CD4-positive, alpha-beta T cell (primary cell): ENCODE measurements at regions of chr5 and their contacts with region 1.

Region 1: DNA sequence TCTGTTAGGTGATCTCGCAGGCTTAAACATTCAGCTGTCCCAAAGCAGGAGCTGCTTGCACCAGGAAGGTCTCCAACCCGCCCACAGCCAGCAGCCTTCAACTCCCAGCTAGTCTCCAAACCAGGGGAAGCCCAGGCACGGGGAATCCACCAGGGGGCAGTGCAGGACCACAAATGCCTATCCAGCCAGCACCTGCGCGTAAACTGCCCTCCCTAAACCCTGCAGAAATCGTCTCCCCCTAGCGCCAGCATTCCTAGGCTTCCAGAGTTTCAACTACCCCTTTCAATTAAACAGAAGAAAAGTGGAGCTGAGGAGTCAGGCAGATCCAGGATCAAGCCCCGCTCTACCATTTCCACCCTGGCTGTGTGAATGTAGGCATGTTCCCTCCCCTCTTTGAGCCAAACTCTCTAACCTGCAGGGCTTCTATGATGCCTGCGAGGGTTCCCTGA is 72.0 kb downstream of the HRH2 start:
- DNase-seq: peak; percentile 85 to 96 (median 92)
- ATAC-seq: peak; percentile 98
- H3K4me3 ChIP-seq: no peak overlapping the region
- H3K4me3 Mint-ChIP-seq: no peak overlapping the region
- H3K27ac ChIP-seq: no peak overlapping the region
- H3K27ac Mint-ChIP-seq: no peak overlapping the region
- H3K4me1 ChIP-seq: peaks cover 8% of the 10 kb centered on the region
- H3K4me1 Mint-ChIP-seq: peaks cover 7% of the 10 kb centered on the region
- H3K27me3 ChIP-seq: peaks cover 10% of the 10 kb centered on the region in 2 experiments
- H3K27me3 Mint-ChIP-seq: peaks cover 31% of the 10 kb centered on the region
- CTCF ChIP-seq: peak; percentile 93

Region 2: DNA sequence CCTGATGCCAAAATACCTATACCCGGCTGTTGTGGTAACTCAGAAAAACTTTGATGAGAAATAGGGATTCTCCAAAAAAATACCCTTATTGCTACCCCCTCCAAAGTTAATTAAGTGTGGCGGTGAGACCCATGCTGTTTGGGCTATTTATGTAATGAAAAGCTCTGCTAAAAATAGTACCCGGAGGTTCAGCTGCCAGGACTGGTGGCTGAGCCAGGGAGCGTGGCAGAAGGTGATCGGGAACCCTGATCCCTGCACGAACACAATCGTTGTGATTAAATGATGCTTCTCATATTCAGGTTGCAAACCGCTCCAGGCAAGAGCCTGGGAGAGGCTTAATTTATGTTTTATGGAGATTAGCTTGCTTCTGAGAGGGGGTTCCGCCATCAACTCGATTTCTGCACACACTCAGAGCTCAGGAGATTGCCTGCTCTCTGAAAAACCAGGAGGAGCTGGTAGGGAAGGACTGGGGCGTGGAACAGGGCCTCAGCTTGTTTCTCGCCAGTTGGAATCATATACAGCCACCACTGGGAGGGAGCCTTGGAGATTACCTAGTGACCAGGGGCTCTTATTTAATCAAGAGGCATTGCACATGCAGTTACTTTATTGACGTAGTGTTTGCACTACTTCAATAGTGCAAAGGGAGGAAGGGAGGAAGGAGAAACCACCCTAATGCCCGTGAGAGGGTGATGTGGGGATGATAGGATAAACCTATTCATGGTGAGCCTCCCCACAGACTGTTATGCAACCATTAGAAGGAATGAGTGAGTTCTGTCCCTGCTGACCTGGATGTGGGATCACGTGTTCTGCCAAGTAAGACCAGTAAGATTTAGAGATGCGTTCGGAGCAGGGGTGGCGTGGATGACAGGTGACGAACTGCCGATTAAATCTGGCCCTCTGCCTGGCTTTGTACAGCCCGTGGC is 48.5 kb before region 1 on chr5:
- CTCF ChIA-PET with region 1: no interaction called
- POLR2A ChIA-PET with region 1: no interaction called
- intact Hi-C with region 1: no loop called
- DNase-seq: no peak
- ATAC-seq: no peak
- H3K4me3 ChIP-seq: no peak overlapping the region
- H3K4me3 Mint-ChIP-seq: no peak overlapping the region
- H3K27ac ChIP-seq: no peak overlapping the region
- H3K27ac Mint-ChIP-seq: no peak overlapping the region
- H3K4me1 ChIP-seq: peaks cover 31% of the 10 kb centered on the region
- H3K4me1 Mint-ChIP-seq: peaks cover 56% of the 10 kb centered on the region
- H3K27me3 ChIP-seq: no peaks in the 10 kb centered on the region
- H3K27me3 Mint-ChIP-seq: no peaks in the 10 kb centered on the region
- CTCF ChIP-seq: no peak

Region 3: DNA sequence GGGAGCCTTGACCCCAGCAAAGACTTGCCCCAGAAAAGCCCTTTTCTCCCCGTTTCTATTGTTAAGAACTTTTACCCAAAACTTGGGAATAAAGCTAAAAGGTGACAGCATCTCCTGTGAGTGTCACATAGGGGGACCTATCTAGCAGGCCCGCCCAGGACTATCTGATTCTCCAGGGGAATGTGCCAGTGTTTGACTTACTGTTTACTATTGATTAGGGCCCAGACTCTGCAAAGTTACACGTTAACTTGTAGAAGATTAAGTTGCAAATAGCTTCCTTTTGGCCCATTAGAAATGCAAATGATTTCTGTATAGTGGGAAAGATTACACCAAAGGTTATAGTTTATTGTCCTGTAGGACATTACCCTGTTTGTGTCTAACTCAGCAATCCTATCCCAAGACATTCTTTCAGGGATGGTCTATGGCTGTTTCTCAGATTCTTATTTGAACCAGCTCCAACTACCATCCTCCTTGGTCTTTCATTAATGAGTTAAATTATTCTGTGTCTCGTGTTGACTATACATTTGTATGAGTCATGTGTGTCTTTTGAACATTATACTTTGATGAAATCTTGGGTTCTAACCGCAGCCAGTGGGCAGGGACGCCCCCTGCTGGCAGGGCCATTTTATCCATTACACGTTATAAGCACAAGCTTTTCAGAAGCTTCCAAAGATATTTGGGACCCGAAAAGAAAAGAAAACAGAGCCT is 11.3 kb before region 1 on chr5:
- CTCF ChIA-PET with region 1: interaction called, 16 read pairs
- POLR2A ChIA-PET with region 1: no interaction called
- intact Hi-C with region 1: no loop called
- DNase-seq: peak; percentile 20 to 82 (median 52)
- ATAC-seq: no peak
- H3K4me3 ChIP-seq: no peak overlapping the region
- H3K4me3 Mint-ChIP-seq: no peak overlapping the region
- H3K27ac ChIP-seq: no peak overlapping the region
- H3K27ac Mint-ChIP-seq: no peak overlapping the region
- H3K4me1 ChIP-seq: no peaks in the 10 kb centered on the region
- H3K4me1 Mint-ChIP-seq: peaks cover 6% of the 10 kb centered on the region
- H3K27me3 ChIP-seq: no peaks in the 10 kb centered on the region
- H3K27me3 Mint-ChIP-seq: no peaks in the 10 kb centered on the region
- CTCF ChIP-seq: peak; percentile 75

Region 4: DNA sequence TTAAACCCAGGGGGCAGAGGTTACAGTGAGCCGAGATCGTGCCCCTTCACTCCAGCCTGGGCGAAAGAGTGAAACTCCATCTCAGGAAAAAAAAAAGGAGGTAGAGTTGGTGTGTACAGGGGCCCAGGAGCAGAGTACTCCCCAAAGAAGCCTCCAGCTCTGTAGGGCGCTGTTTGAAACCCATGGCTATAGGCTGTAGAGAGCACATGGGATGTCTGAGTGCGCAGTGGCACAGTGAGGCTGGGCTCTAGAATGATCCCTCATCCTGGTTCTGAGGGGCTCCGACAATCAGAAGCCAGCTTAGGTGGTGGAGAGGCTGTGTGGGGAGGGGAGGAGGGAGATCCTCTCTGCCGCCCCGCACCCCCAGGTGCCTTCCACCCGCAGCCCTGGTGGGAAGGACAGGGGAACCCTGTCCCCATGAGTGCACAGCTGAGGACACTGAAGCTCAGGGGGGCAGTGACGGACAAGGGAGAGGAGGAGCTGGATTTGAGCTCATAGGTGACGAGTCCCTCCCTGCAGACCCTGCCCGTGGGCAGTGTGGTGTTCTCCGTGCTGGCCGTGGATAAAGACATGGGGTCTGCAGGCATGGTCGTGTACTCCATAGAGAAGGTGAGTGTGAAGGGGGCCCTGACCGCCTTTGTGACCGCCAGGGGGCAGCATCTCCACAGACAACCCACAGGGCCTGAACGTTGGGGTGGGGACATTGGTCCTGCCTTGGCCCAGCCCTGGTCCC is 843.9 kb after region 1 on chr5:
- CTCF ChIA-PET with region 1: no interaction called
- POLR2A ChIA-PET with region 1: no interaction called
- intact Hi-C with region 1: loop called in 1 of 2 experiments (anchors 5 kb)
- DNase-seq: peak; percentile 60 to 89 (median 76)
- ATAC-seq: peak; percentile 79
- H3K4me3 ChIP-seq: no peak overlapping the region
- H3K4me3 Mint-ChIP-seq: no peak overlapping the region
- H3K27ac ChIP-seq: no peak overlapping the region
- H3K27ac Mint-ChIP-seq: no peak overlapping the region
- H3K4me1 ChIP-seq: peaks cover 13% of the 10 kb centered on the region
- H3K4me1 Mint-ChIP-seq: no peaks in the 10 kb centered on the region
- H3K27me3 ChIP-seq: no peaks in the 10 kb centered on the region
- H3K27me3 Mint-ChIP-seq: peaks cover 4% of the 10 kb centered on the region
- CTCF ChIP-seq: peak; percentile 79

Region 5: DNA sequence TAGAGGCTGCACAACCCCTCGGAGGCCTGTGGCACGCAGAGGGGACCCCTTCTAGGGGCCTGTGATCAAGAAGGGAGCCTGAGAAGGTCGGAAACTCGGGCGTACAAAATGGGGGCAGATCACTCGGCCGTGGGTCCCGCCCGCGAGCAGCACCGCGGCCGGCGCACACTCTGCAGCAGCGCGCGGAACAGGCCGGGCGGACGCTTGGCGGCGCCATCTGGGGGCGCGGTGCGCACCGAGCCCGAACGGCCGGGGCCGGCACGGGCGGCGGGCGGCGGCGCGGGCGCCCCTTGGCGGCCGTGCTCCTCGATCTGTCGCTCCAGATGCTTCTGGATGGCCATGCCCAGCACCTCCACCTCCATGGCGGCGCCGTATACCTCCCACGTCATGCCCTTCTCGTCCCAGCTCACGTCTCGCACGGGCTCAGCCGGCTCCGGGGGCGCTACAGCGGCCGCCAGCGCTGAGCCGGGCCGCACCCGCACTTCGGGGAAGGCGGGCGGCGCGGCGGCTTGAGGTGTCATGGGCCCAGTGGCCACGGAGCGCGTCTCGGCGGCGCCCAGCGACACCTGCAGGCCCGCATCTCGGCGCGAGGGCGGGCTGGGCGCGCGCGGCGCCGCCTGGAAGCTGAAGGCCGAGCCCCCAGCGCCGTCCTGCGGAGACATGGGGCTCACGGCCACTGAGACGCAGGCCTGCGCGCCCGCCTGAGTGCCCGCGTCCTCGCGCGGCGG is 867.0 kb after region 1 on chr5:
- CTCF ChIA-PET with region 1: no interaction called
- POLR2A ChIA-PET with region 1: no interaction called
- intact Hi-C with region 1: loop called in 1 of 2 experiments (anchors 5 kb)
- DNase-seq: peak; percentile 51 to 89 (median 67)
- ATAC-seq: peak; percentile 84
- H3K4me3 ChIP-seq: peak overlapping the region; percentile 33
- H3K4me3 Mint-ChIP-seq: peak overlapping the region; percentile 82
- H3K27ac ChIP-seq: no peak overlapping the region
- H3K27ac Mint-ChIP-seq: no peak overlapping the region
- H3K4me1 ChIP-seq: peaks cover 12% of the 10 kb centered on the region
- H3K4me1 Mint-ChIP-seq: peaks cover 8% of the 10 kb centered on the region
- H3K27me3 ChIP-seq: no peaks in the 10 kb centered on the region
- H3K27me3 Mint-ChIP-seq: no peaks in the 10 kb centered on the region
- CTCF ChIP-seq: peak; percentile 11

Region 6: GRCh38 chr5:176660860-176661641 is 931.2 kb after region 1 on chr5:
- CTCF ChIA-PET with region 1: interaction called, 5 read pairs
- POLR2A ChIA-PET with region 1: no interaction called
- intact Hi-C with region 1: loop called in 1 of 2 experiments (anchors 5 kb)
- DNase-seq: peak; percentile 58 to 91 (median 73)
- ATAC-seq: peak; percentile 76
- H3K4me3 ChIP-seq: no peak overlapping the region
- H3K4me3 Mint-ChIP-seq: peak overlapping the region; percentile 83
- H3K27ac ChIP-seq: no peak overlapping the region
- H3K27ac Mint-ChIP-seq: peak overlapping the region; percentile 52
- H3K4me1 ChIP-seq: peaks cover 35% of the 10 kb centered on the region
- H3K4me1 Mint-ChIP-seq: peaks cover 33% of the 10 kb centered on the region
- H3K27me3 ChIP-seq: peaks cover 0 to 2% of the 10 kb centered on the region in 2 experiments
- H3K27me3 Mint-ChIP-seq: peaks cover 22% of the 10 kb centered on the region
- CTCF ChIP-seq: peak; percentile 97

Region 7: DNA sequence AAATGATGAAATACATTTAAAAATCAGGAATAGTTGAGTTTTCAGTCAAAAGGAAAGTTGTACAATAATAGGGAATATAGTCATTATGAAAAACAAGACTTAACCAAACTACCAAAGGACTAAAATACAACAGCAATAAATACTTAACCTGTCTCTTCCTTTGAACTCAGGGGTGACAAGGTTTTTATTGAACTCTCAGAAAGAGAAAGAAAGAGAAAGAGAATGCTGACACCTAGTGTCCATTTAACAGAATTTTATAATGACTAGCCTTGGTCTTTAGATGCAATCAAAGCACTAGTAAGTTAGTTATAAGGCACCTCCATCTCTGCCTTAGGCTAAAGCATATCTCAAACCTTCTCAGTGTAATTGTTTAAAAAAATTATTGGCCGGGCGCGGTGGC is 1229.2 kb after region 1 on chr5:
- CTCF ChIA-PET with region 1: no interaction called
- POLR2A ChIA-PET with region 1: no interaction called
- intact Hi-C with region 1: loop called in 1 of 2 experiments (anchors 5 kb)
- DNase-seq: peak in 3 of 14 experiments; percentile 51 to 61 (median 61)
- ATAC-seq: peak; percentile 49
- H3K4me3 ChIP-seq: no peak overlapping the region
- H3K4me3 Mint-ChIP-seq: no peak overlapping the region
- H3K27ac ChIP-seq: no peak overlapping the region
- H3K27ac Mint-ChIP-seq: peak overlapping the region; percentile 21
- H3K4me1 ChIP-seq: no peaks in the 10 kb centered on the region
- H3K4me1 Mint-ChIP-seq: peaks cover 6% of the 10 kb centered on the region
- H3K27me3 ChIP-seq: no peaks in the 10 kb centered on the region
- H3K27me3 Mint-ChIP-seq: no peaks in the 10 kb centered on the region
- CTCF ChIP-seq: no peak